ENCODE measurements at regions of chr1 and their contacts with region 1.

Region 1: DNA sequence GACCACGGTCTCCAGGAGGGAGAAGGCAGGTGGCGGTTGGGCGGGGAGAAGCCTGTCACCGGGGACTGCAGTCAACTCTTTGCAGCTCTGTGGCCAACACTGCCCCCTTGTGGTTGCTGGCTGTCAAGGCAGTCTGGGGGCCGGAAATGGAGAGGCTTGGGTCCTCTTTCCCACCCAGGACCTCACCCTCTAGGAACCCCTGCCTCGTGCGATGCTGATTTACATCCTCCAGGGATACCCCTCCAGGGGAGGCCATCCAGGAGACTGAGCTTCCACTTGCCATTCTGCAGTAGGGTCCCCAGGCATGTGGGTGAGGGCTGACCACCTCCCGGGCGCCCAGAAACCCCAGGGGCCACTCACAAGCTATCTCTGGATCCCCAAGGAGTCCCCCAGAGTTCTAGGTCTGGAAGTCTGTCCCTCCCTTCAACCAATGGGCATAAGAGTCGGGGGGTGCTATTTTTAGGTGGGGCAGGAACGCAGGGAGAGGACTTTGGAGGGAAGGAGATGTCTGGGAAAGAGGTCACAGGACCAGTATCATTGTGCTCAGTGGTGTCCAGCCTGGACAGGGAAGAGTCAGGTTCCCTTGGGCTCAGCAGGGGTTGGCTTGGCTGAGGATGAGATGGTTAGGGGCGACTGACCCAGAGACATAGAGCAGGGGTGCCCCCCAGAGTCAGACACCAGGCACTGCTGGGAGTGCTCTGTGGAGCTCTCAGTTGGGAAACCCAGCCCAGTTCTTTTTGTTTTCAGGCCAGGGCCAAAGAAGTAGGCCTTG is 7.1 kb upstream of the GPR61 start:
- DNase-seq: peak; percentile 94
- H3K4me3 Mint-ChIP-seq: peak overlapping the region; percentile 59
- H3K27ac Mint-ChIP-seq: peak overlapping the region; percentile 81
- H3K4me1 Mint-ChIP-seq: peaks cover 20% of the 10 kb centered on the region
- H3K27me3 Mint-ChIP-seq: no peaks in the 10 kb centered on the region

Region 2: GRCh38 chr1:109239580-109240095 is 292.9 kb before region 1 on chr1:
- CTCF ChIA-PET with region 1: interaction called, 13 read pairs
- POLR2A ChIA-PET with region 1: no interaction called
- intact Hi-C with region 1: no loop called
- DNase-seq: peak; percentile 44
- H3K4me3 Mint-ChIP-seq: no peak overlapping the region
- H3K27ac Mint-ChIP-seq: peak overlapping the region; percentile 29
- H3K4me1 Mint-ChIP-seq: peaks cover 16% of the 10 kb centered on the region
- H3K27me3 Mint-ChIP-seq: peaks cover 4% of the 10 kb centered on the region

Region 3: DNA sequence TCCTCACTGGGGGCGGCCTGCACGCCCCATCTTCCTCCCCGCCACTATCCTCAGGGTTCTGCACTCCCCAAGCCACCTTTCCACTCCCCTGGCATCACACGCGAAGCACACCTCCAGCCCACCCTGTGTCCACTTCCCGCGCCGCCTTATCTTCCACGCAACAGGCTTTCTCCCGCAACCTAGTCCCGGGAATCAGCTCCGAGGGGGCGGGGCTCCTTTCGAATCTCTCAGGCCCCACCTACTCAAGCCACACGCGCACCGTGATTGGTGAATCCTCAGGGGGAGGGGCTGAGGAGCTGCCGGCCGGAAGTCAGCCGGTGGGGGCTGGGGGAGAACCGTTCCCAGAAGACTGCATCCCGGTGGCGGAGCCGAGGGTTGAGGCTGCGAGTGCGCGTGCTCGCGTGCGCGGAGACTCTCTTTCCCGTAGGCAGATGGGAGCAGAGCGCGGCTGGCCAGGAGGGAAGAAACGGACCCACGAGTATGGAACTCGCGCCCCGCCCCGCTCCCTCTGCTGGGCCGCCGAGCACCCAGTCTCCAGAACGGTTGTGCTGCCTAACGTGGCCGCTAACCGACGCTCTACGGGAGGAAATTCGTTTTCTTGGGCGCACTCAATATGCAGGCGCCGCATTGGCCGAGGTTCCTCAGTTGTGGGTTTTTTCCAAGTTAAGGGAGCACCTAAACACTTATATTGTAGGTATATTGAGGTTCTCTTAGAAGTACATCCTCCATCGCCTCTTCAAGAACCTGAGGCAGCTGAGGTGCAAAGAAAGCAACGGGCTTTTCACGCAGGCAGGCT is 249.4 kb before region 1 on chr1 and contains the start of gene PSRC1:
- CTCF ChIA-PET with region 1: interaction called, 64 read pairs
- POLR2A ChIA-PET with region 1: no interaction called
- intact Hi-C with region 1: loop called (anchors 2 kb)
- DNase-seq: peak; percentile 94
- H3K4me3 Mint-ChIP-seq: peak within 1 kb of the TSS; percentile 95
- H3K27ac Mint-ChIP-seq: peak within 1 kb of the TSS; percentile 89
- H3K4me1 Mint-ChIP-seq: peaks cover 12% of the 10 kb centered on the region
- H3K27me3 Mint-ChIP-seq: no peaks in the 10 kb centered on the region
- total RNA-seq, gene PSRC1: 14.9 to 16.3 TPM

Region 4: DNA sequence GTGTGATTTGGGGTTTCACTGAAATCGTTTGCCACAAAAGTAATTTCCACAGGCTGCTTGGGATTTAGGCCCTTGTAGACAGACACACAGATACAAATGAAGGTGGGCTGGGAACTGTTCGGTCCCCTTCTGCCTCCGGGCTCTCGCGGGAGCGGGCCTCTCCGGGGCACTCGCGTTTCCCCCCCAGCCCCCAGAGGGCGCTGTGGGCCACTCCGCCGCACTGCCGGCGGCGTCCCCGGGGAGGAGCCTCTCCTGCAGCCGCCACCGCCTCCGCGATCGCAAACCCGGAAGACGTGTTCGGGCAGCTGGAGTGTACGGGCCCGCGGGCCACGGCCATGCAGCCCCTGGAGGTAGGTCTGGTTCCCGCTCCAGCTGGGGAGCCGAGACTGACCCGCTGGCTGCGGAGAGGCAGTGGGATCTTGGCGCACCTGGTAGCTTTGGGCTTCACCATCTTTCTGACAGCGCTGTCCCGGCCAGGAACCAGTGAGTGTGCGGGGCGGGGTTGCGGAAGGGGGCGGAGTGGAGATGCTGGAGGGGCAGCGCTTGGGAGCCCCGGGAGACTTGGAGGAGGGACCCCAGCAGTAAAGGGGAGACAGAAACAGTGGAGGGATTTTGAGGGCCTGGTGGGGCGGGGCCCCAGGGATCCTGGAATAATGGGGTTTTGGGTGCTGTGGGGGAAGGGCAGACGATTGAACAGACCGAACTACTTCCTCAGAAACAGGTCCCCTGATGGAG is 38.6 kb before region 1 on chr1 and contains the start of gene CYB561D1:
- CTCF ChIA-PET with region 1: interaction called, 1,096 read pairs
- POLR2A ChIA-PET with region 1: interaction called, 21 read pairs
- intact Hi-C with region 1: loop called (anchors 1 kb)
- DNase-seq: peak; percentile 93
- H3K4me3 Mint-ChIP-seq: peak within 1 kb of the TSS; percentile 89
- H3K27ac Mint-ChIP-seq: peak within 1 kb of the TSS; percentile 78
- H3K4me1 Mint-ChIP-seq: peaks cover 44% of the 10 kb centered on the region
- H3K27me3 Mint-ChIP-seq: no peaks in the 10 kb centered on the region
- total RNA-seq, gene CYB561D1: 6.6 to 8.7 TPM

Region 5: DNA sequence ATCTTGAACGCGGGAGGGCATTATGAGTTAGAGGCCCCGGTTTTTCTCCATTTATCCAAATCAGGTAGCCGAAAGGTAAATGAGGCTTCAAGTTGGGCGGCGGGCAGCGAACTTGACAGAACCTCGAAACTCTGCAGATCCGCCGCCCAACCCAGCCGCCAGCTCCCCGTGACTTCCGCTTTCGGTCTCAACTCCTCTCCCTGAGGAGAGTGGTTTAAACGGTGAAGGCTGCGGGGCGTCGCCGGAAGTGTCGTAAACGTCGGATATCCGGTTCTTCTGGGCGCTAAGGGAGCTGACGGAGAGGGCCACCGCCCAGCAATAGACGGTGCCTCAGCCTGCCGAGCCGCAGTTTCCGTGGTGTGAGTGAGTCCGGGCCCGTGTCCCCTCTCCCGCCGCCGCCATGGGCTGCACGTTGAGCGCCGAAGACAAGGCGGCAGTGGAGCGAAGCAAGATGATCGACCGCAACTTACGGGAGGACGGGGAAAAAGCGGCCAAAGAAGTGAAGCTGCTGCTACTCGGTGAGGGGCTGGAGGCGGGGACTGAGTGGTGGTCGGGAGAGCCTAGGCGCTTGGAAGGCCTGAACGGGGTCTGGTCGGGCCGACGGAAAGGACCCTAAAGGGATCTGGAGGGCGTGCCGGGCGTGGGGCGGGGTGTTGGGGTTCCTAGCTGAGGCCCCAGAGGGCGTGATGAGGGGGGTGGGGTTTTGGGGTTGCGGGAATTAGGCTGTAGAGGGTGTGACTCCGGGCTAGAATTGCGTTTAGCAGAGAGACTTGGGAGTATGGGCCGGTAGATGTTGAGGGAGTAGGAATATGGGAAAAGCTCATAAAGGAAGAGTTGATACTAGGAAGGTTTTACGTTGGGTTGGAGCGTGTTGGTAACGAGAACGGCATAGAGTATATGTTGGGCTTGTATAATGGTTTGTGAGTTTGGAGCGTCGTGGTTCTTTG is 16.0 kb after region 1 on chr1 and contains the start of gene GNAI3:
- CTCF ChIA-PET with region 1: interaction called, 50 read pairs
- POLR2A ChIA-PET with region 1: interaction called, 7 read pairs
- intact Hi-C with region 1: no loop called
- DNase-seq: peak; percentile 98
- H3K4me3 Mint-ChIP-seq: peak within 1 kb of the TSS; percentile 86
- H3K27ac Mint-ChIP-seq: peak within 1 kb of the TSS; percentile 94
- H3K4me1 Mint-ChIP-seq: peaks cover 41% of the 10 kb centered on the region
- H3K27me3 Mint-ChIP-seq: no peaks in the 10 kb centered on the region
- total RNA-seq, gene GNAI3: 9.2 to 9.9 TPM